Naive thymus-derived CD4-positive, alpha-beta T cell (primary cell): ENCODE measurements at regions of chr9 and their contacts with region 1.

Region 1: DNA sequence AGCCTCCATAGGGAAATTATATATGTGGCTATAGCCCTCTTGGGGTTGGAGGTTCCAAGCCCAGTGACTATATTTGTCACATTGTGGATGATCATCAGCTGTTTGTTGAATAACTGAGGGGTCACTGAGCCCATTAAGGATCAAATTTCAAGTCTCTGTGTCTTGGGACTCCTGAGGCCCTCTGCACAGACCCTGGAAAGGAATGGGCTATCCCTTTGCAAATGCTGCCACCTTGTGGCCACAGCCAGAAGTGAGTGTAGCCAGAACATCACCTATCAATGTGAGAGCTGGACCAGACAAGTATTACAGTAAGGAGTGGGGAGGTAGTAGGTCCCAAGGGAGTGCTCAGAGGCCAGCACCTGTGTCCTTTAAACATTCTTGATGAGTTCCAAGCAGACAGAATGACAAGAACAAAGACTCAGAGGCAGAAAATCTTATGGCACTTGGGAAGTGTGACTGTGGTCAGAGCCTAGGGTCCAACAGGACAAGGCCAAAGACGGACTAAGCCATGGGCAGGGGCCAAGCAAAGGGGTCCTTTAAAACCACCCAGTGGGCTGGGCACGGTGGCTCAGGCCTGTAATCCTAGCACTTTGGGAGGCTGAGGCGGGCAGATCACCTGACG is 8.2 kb downstream of the RPP25L start:
- DNase-seq: peak; percentile 53 to 78 (median 71)
- ATAC-seq: peak; percentile 92
- H3K4me3 ChIP-seq: no peak overlapping the region
- H3K4me3 Mint-ChIP-seq: no peak overlapping the region
- H3K27ac ChIP-seq: no peak overlapping the region
- H3K27ac Mint-ChIP-seq: no peak overlapping the region
- H3K4me1 ChIP-seq: no peaks in the 10 kb centered on the region
- H3K4me1 Mint-ChIP-seq: peaks cover 0 to 2% (median 0%) of the 10 kb centered on the region in 7 donors
- H3K27me3 ChIP-seq: no peaks in the 10 kb centered on the region
- H3K27me3 Mint-ChIP-seq: peaks cover 0 to 20% (median 5%) of the 10 kb centered on the region in 5 donors

Region 2: DNA sequence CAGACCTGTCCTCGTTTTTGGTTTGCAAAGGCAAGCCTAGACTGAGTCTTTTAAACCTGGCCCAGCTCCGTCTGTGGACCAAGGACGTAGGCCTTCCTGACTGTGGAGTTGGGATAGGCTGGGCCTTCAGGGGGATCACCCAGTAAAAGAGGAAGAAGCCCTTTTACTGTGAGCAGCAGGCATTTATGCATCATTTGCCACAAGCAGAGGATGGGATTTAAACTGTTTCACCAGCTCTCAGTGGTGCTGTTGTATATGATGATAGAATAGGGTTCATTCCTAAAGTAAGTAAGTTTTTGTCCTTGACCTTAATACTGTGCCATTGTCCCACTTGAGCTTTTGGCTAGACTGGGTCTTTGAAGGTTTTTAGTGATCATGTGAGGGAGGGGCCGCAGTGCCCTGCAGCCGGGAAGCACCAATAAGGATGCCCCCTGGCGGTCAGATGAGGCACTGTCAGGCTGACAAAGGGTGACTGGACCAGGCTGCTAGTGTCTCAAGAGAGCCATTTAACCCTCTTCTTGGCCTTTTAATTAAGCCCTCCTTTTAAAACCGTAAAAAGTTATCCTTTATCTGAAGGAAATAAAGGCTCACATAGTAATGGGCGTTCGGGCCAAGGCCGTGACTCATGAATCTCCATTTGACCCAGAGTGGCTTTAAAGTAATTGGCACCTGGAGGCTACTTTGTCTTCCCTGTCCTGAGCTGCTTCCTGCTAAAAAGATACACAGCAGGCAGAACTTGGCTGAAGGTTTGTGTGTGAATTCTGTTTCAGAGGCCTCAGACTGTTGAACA is 350.9 kb before region 1 on chr9:
- CTCF ChIA-PET with region 1: no interaction called
- POLR2A ChIA-PET with region 1: no interaction called
- intact Hi-C with region 1: loop called in 1 of 2 experiments (anchors 2 kb)
- DNase-seq: peak; percentile 38 to 70 (median 56)
- ATAC-seq: peak; percentile 85
- H3K4me3 ChIP-seq: no peak overlapping the region
- H3K4me3 Mint-ChIP-seq: no peak overlapping the region
- H3K27ac ChIP-seq: no peak overlapping the region
- H3K27ac Mint-ChIP-seq: peak overlapping the region in 7 of 9 donors; percentile 15 to 69 (median 46)
- H3K4me1 ChIP-seq: peaks cover 0 to 6% of the 10 kb centered on the region in 2 donors
- H3K4me1 Mint-ChIP-seq: peaks cover 9 to 21% (median 17%) of the 10 kb centered on the region in 7 donors
- H3K27me3 ChIP-seq: no peaks in the 10 kb centered on the region
- H3K27me3 Mint-ChIP-seq: no peaks in the 10 kb centered on the region

Region 3: DNA sequence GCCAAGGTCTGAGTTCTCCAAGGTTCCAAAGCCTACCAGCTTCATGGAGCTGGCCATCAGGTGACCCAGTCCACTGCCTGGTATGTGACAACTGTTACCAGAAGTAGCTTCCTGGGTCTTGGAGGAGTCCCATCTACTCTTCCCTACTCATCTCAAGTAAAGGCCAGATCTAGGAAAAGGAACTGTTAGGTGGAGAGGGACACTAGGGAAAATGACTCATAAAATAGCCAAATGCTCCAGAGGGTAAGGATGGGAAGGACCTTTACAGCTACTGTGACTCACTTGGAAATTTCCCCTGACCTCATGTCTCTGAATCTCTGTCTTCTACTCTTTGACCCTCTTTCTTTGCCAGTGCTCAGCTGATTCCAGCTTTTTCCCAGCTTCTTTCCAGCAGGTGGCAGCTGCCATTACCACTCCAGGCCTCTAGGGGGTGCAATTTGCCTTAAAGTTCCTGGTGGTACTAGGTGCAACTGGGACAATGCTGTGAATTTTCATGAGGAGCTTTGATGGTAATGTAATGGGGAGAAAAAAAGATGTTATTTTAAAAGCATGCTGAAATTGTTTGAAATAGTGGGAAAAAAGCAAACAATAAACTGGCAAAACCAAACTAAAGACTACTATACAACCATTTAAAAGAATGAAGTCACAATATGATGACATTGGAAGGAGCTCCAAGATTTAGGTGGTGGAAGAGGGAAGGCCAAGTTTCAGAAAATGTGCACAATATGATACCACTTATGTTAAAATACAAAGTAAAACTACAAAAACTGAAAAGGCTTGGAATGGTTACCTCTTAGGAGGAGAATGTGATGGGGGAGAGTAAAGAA is 200.0 kb before region 1 on chr9:
- CTCF ChIA-PET with region 1: interaction called, 3 read pairs
- POLR2A ChIA-PET with region 1: no interaction called
- intact Hi-C with region 1: loop called (anchors 1 to 10 kb)
- DNase-seq: peak in 8 of 9 donors; percentile 22 to 56 (median 40)
- ATAC-seq: peak; percentile 82
- H3K4me3 ChIP-seq: no peak overlapping the region
- H3K4me3 Mint-ChIP-seq: no peak overlapping the region
- H3K27ac ChIP-seq: no peak overlapping the region
- H3K27ac Mint-ChIP-seq: no peak overlapping the region
- H3K4me1 ChIP-seq: no peaks in the 10 kb centered on the region
- H3K4me1 Mint-ChIP-seq: peaks cover 0 to 3% (median 0%) of the 10 kb centered on the region in 7 donors
- H3K27me3 ChIP-seq: no peaks in the 10 kb centered on the region
- H3K27me3 Mint-ChIP-seq: no peaks in the 10 kb centered on the region

Region 4: GRCh38 chr9:34437006-34437925 is 166.5 kb before region 1 on chr9:
- CTCF ChIA-PET with region 1: interaction called, 7 read pairs
- POLR2A ChIA-PET with region 1: no interaction called
- intact Hi-C with region 1: loop called in 1 of 2 experiments (anchors 1 kb)
- DNase-seq: peak in 8 of 9 donors; percentile 49 to 74 (median 65)
- ATAC-seq: peak; percentile 92
- H3K4me3 ChIP-seq: no peak overlapping the region
- H3K4me3 Mint-ChIP-seq: no peak overlapping the region
- H3K27ac ChIP-seq: no peak overlapping the region
- H3K27ac Mint-ChIP-seq: no peak overlapping the region
- H3K4me1 ChIP-seq: peaks cover 0 to 6% of the 10 kb centered on the region in 2 donors
- H3K4me1 Mint-ChIP-seq: peaks cover 6 to 26% (median 17%) of the 10 kb centered on the region in 7 donors
- H3K27me3 ChIP-seq: no peaks in the 10 kb centered on the region
- H3K27me3 Mint-ChIP-seq: no peaks in the 10 kb centered on the region

Region 5: GRCh38 chr9:34500623-34501267 is 103.0 kb before region 1 on chr9:
- CTCF ChIA-PET with region 1: no interaction called
- POLR2A ChIA-PET with region 1: no interaction called
- intact Hi-C with region 1: loop called in 1 of 2 experiments (anchors 1 kb)
- DNase-seq: peak; percentile 38 to 80 (median 61)
- ATAC-seq: peak; percentile 90
- H3K4me3 ChIP-seq: no peak overlapping the region
- H3K4me3 Mint-ChIP-seq: no peak overlapping the region
- H3K27ac ChIP-seq: no peak overlapping the region
- H3K27ac Mint-ChIP-seq: no peak overlapping the region
- H3K4me1 ChIP-seq: no peaks in the 10 kb centered on the region
- H3K4me1 Mint-ChIP-seq: peaks cover 0 to 2% (median 0%) of the 10 kb centered on the region in 7 donors
- H3K27me3 ChIP-seq: no peaks in the 10 kb centered on the region
- H3K27me3 Mint-ChIP-seq: peaks cover 0 to 19% (median 0%) of the 10 kb centered on the region in 5 donors

Region 6: GRCh38 chr9:34546834-34547827 is 56.6 kb before region 1 on chr9:
- CTCF ChIA-PET with region 1: interaction called, 3 read pairs
- POLR2A ChIA-PET with region 1: no interaction called
- intact Hi-C with region 1: loop called in 1 of 2 experiments (anchors 1 kb)
- DNase-seq: peak in 5 of 9 donors; percentile 21 to 47 (median 23)
- ATAC-seq: peak; percentile 58
- H3K4me3 ChIP-seq: no peak overlapping the region
- H3K4me3 Mint-ChIP-seq: peak overlapping the region in 1 of 10 donors; percentile 34
- H3K27ac ChIP-seq: no peak overlapping the region
- H3K27ac Mint-ChIP-seq: no peak overlapping the region
- H3K4me1 ChIP-seq: no peaks in the 10 kb centered on the region
- H3K4me1 Mint-ChIP-seq: peaks cover 0 to 10% (median 0%) of the 10 kb centered on the region in 7 donors
- H3K27me3 ChIP-seq: no peaks in the 10 kb centered on the region
- H3K27me3 Mint-ChIP-seq: peaks cover 7 to 34% (median 12%) of the 10 kb centered on the region in 5 donors

Region 7: DNA sequence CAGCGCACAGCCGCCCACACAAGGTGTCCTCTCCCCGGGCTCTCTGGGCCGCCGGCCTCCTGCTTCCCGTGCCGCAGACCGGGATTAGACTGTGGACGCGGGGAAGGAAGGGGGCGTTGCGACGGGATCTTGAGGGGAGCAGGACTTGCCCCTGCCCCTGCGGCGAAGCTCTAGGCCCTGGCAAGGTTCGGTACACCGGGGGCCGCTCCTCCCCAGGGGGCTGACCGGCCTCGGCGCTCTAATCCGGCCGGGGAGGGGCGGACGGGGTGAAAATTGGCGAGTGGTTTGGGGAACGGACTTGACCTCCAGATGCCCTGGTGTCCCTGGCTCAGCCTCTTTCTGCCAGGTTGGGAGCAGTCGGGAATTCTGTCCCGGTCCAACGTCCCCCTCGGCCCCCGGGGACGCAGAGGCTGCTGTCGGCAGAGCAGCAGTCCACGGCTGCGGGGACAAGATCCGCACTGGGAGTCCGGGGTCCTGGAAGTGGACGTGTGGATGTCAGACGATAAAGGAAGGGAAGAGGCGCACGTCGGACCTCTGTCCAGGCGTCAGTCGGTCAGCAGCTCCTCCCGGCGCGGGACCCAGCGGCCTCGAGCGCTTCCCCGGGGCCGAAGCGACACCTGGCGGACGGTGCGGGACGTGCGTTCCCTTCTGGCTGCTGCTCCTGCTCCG is 12.3 kb before region 1 on chr9:
- CTCF ChIA-PET with region 1: interaction called, 17 read pairs
- POLR2A ChIA-PET with region 1: no interaction called
- intact Hi-C with region 1: no loop called
- DNase-seq: peak; percentile 48 to 85 (median 70)
- ATAC-seq: peak; percentile 85
- H3K4me3 ChIP-seq: peak overlapping the region; percentile 71
- H3K4me3 Mint-ChIP-seq: peak overlapping the region; percentile 28 to 91 (median 81)
- H3K27ac ChIP-seq: no peak overlapping the region
- H3K27ac Mint-ChIP-seq: no peak overlapping the region
- H3K4me1 ChIP-seq: peaks cover 0 to 13% of the 10 kb centered on the region in 2 donors
- H3K4me1 Mint-ChIP-seq: peaks cover 10 to 31% (median 28%) of the 10 kb centered on the region in 7 donors
- H3K27me3 ChIP-seq: peaks cover 4 to 17% of the 10 kb centered on the region in 2 donors
- H3K27me3 Mint-ChIP-seq: peaks cover 55 to 78% (median 66%) of the 10 kb centered on the region in 5 donors